ENCODE measurements at regions of chr5 and their contacts with region 1.

Region 1: GRCh38 chr5:135172718-135173117 is 138.7 kb upstream of the PITX1 start:
- DNase-seq: no peak
- ATAC-seq: no peak
- H3K4me3 ChIP-seq: no peak overlapping the region
- H3K27ac ChIP-seq: no peak overlapping the region
- H3K4me1 ChIP-seq: no peaks in the 10 kb centered on the region
- H3K27me3 ChIP-seq: peaks cover 16% of the 10 kb centered on the region; the same call in 1 of the 2 replicates
- CTCF ChIP-seq: no peak

Region 2: DNA sequence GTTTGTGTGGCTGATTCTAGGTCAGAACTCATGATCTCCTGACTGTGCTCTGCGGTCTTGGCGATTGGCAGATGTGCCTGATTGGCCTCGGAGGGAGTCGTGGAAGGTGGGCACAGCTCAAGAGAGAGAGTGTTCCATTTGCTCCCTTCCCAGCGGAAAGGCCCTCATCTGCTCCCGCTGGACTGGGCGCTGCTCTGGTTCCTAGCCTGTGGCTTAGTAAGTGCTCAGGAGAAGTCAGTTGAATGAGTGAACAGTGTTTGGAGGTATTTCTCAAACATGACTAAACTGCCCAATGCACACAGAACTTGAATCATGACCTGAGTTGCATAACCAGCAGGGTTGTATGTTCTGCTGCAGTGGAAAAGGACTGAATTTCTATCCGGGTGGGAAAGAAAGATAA is 18.5 kb before region 1 on chr5:
- CTCF ChIA-PET with region 1: no interaction called
- POLR2A ChIA-PET with region 1: no interaction called
- in situ Hi-C with region 1: no loop called
- intact Hi-C with region 1: loop called (anchors 1 kb)
- DNase-seq: no peak
- ATAC-seq: no peak
- H3K4me3 ChIP-seq: no peak overlapping the region
- H3K27ac ChIP-seq: no peak overlapping the region
- H3K4me1 ChIP-seq: no peaks in the 10 kb centered on the region
- H3K27me3 ChIP-seq: no peaks in the 10 kb centered on the region
- CTCF ChIP-seq: no peak

Measured in Panc1 (cell line).